Cardiac septum (tissue), 1 donor: ENCODE measurements at regions of chr2 and their contacts with region 1.

Region 1: DNA sequence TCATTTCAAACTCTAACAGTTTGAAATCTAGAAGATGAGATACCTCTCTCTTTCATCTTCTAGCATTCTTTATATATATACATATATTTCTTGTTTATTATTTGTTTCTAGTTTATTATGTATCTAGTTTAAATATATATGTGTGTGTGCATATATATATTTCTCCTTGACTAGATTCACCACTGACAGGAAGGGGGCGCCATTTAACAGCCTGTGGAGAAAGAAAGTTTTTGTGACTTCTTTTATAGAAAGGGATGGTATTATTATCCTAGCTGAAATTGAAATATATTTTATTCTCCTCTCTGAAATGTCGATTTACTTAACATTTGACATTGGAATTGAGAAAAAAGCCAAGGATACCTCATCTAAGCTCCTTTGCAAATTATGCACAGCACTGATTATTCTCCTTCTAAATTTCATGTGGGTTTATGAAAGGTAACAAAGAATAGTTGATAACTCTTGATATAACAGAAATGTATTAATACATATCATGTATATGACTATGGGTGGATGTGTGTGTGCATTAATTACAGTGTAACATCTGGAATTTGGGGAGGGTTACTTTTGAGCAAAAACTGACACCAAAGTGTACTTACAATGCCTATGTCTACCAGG is 160.7 kb upstream of the NT5C1B start:
- DNase-seq: no peak

Region 2: GRCh38 chr2:18976168-18976961 is 226.3 kb after region 1 on chr2:
- intact Hi-C with region 1: loop called (anchors 10 kb)
- DNase-seq: no peak